ENCODE measurements at regions of chr10 and their contacts with region 1.

Region 1: GRCh38 chr10:61961278-61961677 is 59.8 kb downstream of the ARID5B start:
- DNase-seq: no peak
- ATAC-seq: peak; percentile 52
- H3K4me3 Mint-ChIP-seq: peak overlapping the region; percentile 35
- H3K27ac Mint-ChIP-seq: peak overlapping the region; percentile 88
- H3K4me1 Mint-ChIP-seq: peaks cover 87% of the 10 kb centered on the region
- H3K27me3 Mint-ChIP-seq: no peaks in the 10 kb centered on the region
- CTCF ChIP-seq: no peak

Region 2: DNA sequence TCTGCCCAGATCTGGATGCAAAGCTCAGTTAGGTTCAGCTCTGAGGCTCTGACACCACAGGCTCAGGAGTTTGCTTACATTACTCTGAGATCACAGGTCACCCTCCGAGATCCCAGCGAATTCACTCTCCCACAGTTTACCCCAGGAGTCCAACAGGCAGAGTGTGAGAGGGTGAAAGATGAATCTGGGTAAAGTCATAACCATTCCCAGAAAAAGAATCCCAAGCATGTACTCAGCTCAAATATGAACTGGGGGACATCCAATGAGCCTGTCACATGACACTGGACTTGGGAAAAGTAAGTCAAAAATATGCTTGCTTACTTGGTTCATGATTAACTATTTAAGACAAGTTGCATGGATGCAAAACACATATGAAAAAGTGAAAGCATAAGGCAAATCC is 170.1 kb before region 1 on chr10:
- CTCF ChIA-PET with region 1: no interaction called
- POLR2A ChIA-PET with region 1: no interaction called
- intact Hi-C with region 1: no loop called
- DNase-seq: no peak
- ATAC-seq: no peak
- H3K4me3 Mint-ChIP-seq: no peak overlapping the region
- H3K27ac Mint-ChIP-seq: no peak overlapping the region
- H3K4me1 Mint-ChIP-seq: no peaks in the 10 kb centered on the region
- H3K27me3 Mint-ChIP-seq: no peaks in the 10 kb centered on the region
- CTCF ChIP-seq: no peak

Region 3: DNA sequence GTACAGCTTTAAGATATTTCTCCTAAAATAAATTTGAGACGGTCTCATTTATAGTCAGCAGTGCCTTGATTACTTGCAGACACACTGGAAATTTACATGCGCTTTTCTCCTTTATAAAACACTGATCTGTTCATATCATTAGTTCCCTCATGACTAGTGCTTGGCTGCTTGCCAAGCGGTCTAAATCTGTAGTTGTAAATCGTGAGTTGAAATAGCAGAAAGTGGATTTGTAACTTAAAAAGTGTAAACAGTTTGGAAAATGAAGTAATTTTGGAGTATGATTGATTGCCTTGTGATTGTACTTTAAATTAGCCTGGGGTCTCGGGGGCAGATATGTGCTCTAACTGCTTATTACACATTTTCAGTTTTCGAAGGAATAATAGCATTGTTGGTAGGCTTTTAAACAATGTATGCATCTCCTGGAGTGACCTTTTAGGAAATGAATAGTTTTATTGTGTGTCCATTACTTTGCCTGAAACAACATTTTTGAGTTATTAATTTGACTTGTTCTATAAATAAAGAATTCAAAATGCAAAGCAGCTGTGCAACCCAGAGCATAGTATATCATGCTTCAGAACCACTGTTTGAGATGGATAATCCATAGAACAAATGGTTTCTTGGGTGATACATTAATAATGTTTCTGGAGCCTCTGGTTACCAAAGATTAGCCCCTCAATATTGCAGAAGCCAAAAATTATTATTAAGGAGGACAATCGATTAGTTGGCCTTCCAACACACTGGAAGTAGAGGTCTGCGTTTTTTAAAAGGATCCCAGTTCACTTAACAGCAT is 13.5 kb after region 1 on chr10:
- CTCF ChIA-PET with region 1: no interaction called
- POLR2A ChIA-PET with region 1: interaction called, 11 read pairs
- intact Hi-C with region 1: no loop called
- DNase-seq: no peak
- ATAC-seq: no peak
- H3K4me3 Mint-ChIP-seq: peak overlapping the region; percentile 60
- H3K27ac Mint-ChIP-seq: peak overlapping the region; percentile 81
- H3K4me1 Mint-ChIP-seq: peaks cover 84% of the 10 kb centered on the region
- H3K27me3 Mint-ChIP-seq: no peaks in the 10 kb centered on the region
- CTCF ChIP-seq: no peak

Measured in activated B cell treated with CpG ODN at 0.5 μM for 24 hours (primary cell).